Right cardiac atrium (tissue), 5 donors: ENCODE measurements at regions of chr20 and their contacts with region 1.

Region 1: GRCh38 chr20:5297280-5298004 is 19.3 kb downstream of the PROKR2 start:
- DNase-seq: no peak
- ATAC-seq: no peak
- H3K4me3 ChIP-seq: no peak overlapping the region
- H3K27ac ChIP-seq: no peak overlapping the region
- H3K4me1 ChIP-seq: no peaks in the 10 kb centered on the region
- H3K27me3 ChIP-seq: no peaks in the 10 kb centered on the region

Region 2: GRCh38 chr20:5126512-5127203 is 170.8 kb before region 1 on chr20 and contains the start of gene CDS2:
- intact Hi-C with region 1: no loop called
- DNase-seq: peak; percentile 100
- ATAC-seq: peak; percentile 98
- H3K4me3 ChIP-seq: peak within 1 kb of the TSS; percentile 80
- H3K27ac ChIP-seq: peak within 1 kb of the TSS; percentile 90
- H3K4me1 ChIP-seq: peaks cover 2% of the 10 kb centered on the region
- H3K27me3 ChIP-seq: no peaks in the 10 kb centered on the region
- total RNA-seq, gene CDS2: 79.4 to 98.6 (median 88.2) TPM

Region 3: DNA sequence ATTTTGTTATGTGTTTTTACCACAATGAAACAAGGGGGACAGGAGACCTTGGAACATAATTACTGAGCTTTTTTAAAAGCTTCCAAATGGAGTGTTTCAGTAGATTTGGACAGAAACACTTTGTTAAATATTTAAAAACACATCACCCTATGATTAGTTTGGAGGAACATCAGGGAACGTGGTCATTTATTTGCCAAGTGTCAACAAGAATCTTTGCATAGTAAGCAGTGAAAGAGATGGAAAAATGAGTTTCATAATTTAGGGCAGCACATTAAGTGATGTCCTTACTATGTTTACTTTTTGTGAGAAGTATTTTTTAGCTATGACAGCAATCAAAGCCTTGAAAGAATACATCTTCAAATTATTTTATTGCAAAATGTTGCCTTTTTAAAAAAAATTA is 63.3 kb before region 1 on chr20:
- intact Hi-C with region 1: loop called in 1 of 4 experiments (anchors 10 kb)
- DNase-seq: no peak
- ATAC-seq: no peak
- H3K4me3 ChIP-seq: no peak overlapping the region
- H3K27ac ChIP-seq: no peak overlapping the region
- H3K4me1 ChIP-seq: no peaks in the 10 kb centered on the region
- H3K27me3 ChIP-seq: no peaks in the 10 kb centered on the region